ENCODE measurements at regions of chr17 and their contacts with region 1.

Region 1: GRCh38 chr17:49567871-49568694 is 7.6 kb upstream of the NXPH3 start:
- DNase-seq: peak; percentile 87 to 90 (median 89)
- ATAC-seq: peak; percentile 81
- H3K4me3 ChIP-seq: no peak overlapping the region
- H3K4me1 ChIP-seq: peaks cover 4% of the 10 kb centered on the region
- CTCF ChIP-seq: peak; percentile 97

Region 2: GRCh38 chr17:49616601-49617131 is 48.6 kb after region 1 on chr17:
- intact Hi-C with region 1: no loop called
- DNase-seq: peak in 2 of 3 donors; percentile 20 to 57
- ATAC-seq: peak; percentile 49
- H3K4me3 ChIP-seq: no peak overlapping the region
- H3K4me1 ChIP-seq: no peaks in the 10 kb centered on the region
- CTCF ChIP-seq: no peak

Region 3: DNA sequence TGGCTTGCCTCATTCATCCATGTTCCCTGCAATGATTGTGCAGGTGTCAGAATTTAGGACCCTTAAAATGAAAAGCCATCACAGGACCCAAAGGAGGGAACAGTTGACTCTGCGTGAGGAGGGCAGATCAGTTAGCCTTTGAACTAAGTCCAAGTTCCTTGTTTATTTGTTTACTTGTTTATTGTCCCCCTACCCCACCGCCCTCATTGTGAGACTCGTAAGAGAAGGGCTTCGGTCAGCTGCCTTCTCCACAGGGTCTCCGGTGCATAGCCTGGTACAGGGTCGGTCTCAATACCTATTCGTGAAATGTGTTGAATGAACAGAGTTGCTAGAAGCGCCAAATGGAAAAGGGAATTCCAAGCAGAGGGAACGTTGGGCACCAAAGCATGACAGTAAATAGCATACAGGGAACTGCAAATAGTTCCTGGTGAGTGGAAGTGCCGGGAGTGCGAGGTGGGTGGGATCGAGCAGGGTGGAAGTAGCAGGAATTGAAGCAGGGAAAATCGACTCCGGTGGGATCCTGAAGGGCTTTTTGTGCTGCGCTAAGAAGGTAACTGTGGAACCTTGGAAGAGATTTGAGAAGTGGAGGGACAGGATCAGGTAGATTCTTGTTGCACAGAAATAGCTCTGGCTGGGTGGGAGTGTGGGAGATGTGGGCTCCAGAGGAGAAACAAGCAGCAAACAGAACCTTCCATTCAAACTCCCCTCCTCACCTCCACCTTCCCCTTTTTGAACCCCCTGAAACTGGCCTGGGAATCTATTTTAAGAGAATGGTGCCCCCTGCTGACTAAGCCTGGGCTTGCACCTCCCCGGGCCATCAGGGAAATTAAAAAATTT is 127.0 kb after region 1 on chr17:
- intact Hi-C with region 1: loop called (anchors 2 kb)
- DNase-seq: peak in 2 of 3 donors; percentile 73 to 85
- ATAC-seq: peak; percentile 71
- H3K4me3 ChIP-seq: no peak overlapping the region
- H3K4me1 ChIP-seq: no peaks in the 10 kb centered on the region
- CTCF ChIP-seq: peak; percentile 88

Region 4: GRCh38 chr17:49851387-49852291 is 283.6 kb after region 1 on chr17:
- intact Hi-C with region 1: loop called (anchors 2 to 10 kb)
- DNase-seq: peak; percentile 67 to 74 (median 72)
- ATAC-seq: peak; percentile 72
- H3K4me3 ChIP-seq: peak overlapping the region; percentile 17
- H3K4me1 ChIP-seq: peaks cover 3% of the 10 kb centered on the region
- CTCF ChIP-seq: no peak

Measured in mucosa of descending colon (tissue), 3 donors.